ENCODE measurements at regions of chr1 and their contacts with region 1.

Region 1: DNA sequence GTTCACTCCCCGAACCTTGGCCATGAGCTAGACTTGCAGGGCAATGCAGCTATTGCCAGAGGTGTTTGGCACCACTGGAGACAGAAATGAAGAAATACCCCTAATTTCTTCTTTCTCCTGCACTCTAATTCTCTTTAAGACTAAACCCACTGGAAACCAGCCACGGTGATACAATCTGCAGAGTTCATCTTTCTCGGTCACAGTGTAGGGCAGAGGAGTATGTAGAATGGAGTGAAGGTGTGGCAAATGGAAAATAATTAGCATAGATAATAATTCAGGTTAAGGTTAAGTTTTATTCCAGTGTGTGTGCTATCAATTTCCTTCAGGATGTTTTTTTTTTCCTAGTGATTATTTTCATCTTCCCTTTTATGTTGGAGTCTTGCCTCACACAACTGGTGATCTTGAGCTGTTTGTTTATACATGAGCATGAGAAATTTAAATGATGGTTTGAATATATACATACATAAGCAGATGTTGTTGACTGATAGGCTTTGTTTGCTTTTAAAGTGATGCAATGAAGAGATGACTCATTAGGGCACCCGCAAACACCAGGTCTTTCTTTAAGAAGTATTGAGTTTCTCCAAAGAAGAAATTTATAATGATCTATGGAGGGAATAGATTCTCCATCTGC is 81.9 kb downstream of the SPATA17 start:
- DNase-seq: no peak

Region 2: GRCh38 chr1:217881569-217882338 is 168.7 kb after region 1 on chr1:
- intact Hi-C with region 1: no loop called
- DNase-seq: peak in 1 of 10 donors; percentile 74

Region 3: DNA sequence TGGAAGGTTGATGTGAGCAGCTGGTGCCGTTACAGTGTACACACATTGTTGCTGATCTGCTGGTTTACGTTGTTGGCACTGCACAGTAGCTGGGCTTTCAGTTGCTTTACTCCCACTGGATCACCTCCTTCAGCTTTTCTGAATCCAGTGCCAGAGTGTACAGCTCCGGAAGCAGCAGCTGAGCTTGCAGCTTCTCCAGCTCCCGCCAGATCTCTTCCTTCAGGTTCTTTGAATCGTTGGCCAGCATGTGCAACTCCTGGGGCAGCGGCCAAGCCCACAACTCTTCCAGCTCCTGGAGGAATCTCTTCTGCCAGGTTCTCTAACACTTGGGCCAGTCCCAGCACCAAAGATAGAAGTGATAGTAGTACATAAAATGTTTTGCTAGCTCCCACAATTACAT is 422.3 kb after region 1 on chr1:
- intact Hi-C with region 1: loop called (anchors 5 kb)
- DNase-seq: peak in 3 of 10 donors; percentile 5 to 83 (median 25)